ENCODE measurements at regions of chr2 and their contacts with region 1.

Region 1: GRCh38 chr2:222805541-222806304 is 55.1 kb upstream of the ACSL3 start:
- DNase-seq: peak in 2 of 4 experiments; percentile 13 to 36
- ATAC-seq: peak; percentile 91
- H3K4me3 ChIP-seq: no peak overlapping the region
- H3K27ac ChIP-seq: no peak overlapping the region; the same call in 2 of the 3 replicates
- H3K4me1 ChIP-seq: peaks cover 0 to 13% of the 10 kb centered on the region in 2 experiments; a peak in 3 of 5 replicates
- H3K27me3 ChIP-seq: no peaks in the 10 kb centered on the region
- CTCF ChIP-seq: no peak
- EP300 ChIP-seq: peak; percentile 85
- POLR2A ChIP-seq: no peak
- RAD21 ChIP-seq: peak; percentile 26 to 30; a peak in 2 of 4 replicates

Region 2: GRCh38 chr2:222860740-222861410 is 55.2 kb after region 1 on chr2 and contains the start of gene ACSL3:
- CTCF ChIA-PET with region 1: no interaction called
- POLR2A ChIA-PET with region 1: interaction called, 5 read pairs
- in situ Hi-C with region 1: no loop called
- intact Hi-C with region 1: loop called (anchors 2 kb)
- DNase-seq: peak; percentile 88 to 94 (median 90)
- ATAC-seq: peak; percentile 97
- H3K4me3 ChIP-seq: peak within 1 kb of the TSS; percentile 93
- H3K27ac ChIP-seq: peak within 1 kb of the TSS; percentile 92
- H3K4me1 ChIP-seq: peaks cover 6 to 35% of the 10 kb centered on the region in 2 experiments; a peak in 4 of 5 replicates
- H3K27me3 ChIP-seq: no peaks in the 10 kb centered on the region
- CTCF ChIP-seq: peak in 1 of 3 experiments; percentile 8; a peak in 1 of 6 replicates
- EP300 ChIP-seq: 0 out of 2 replicates have a peak, but pooled peaks have one; percentile 19
- POLR2A ChIP-seq: peak; percentile 96
- RAD21 ChIP-seq: 0 out of 4 replicates have a peak, but pooled peaks of 1 of the 2 experiments have one; percentile 1
- polyA plus RNA-seq, gene ACSL3: 21.3 to 28.0 TPM

Region 3: GRCh38 chr2:223058952-223059716 is 253.4 kb after region 1 on chr2:
- CTCF ChIA-PET with region 1: no interaction called
- POLR2A ChIA-PET with region 1: no interaction called
- in situ Hi-C with region 1: no loop called
- intact Hi-C with region 1: no loop called
- DNase-seq: peak; percentile 48 to 87 (median 66)
- ATAC-seq: peak; percentile 91
- H3K4me3 ChIP-seq: no peak overlapping the region
- H3K27ac ChIP-seq: peak overlapping the region; percentile 65; the same call in 2 of the 3 replicates
- H3K4me1 ChIP-seq: peaks cover 3 to 44% of the 10 kb centered on the region in 2 experiments; a peak in 3 of 5 replicates
- H3K27me3 ChIP-seq: no peaks in the 10 kb centered on the region
- CTCF ChIP-seq: no peak
- EP300 ChIP-seq: peak; percentile 87
- POLR2A ChIP-seq: no peak
- RAD21 ChIP-seq: no peak